ENCODE measurements at regions of chr1 and their contacts with region 1.

Region 1: GRCh38 chr1:18100491-18101063 is 7.0 kb upstream of the IGSF21 start:
- DNase-seq: peak; percentile 67
- ATAC-seq: no peak
- H3K4me3 Mint-ChIP-seq: no peak overlapping the region
- H3K27ac Mint-ChIP-seq: no peak overlapping the region
- H3K4me1 Mint-ChIP-seq: no peaks in the 10 kb centered on the region
- H3K27me3 Mint-ChIP-seq: peaks cover 23% of the 10 kb centered on the region
- CTCF ChIP-seq: peak; percentile 85

Region 2: GRCh38 chr1:17759114-17759513 is 341.5 kb before region 1 on chr1:
- CTCF ChIA-PET with region 1: no interaction called
- POLR2A ChIA-PET with region 1: no interaction called
- intact Hi-C with region 1: no loop called
- DNase-seq: peak; percentile 12
- ATAC-seq: no peak
- H3K4me3 Mint-ChIP-seq: no peak overlapping the region
- H3K27ac Mint-ChIP-seq: no peak overlapping the region
- H3K4me1 Mint-ChIP-seq: no peaks in the 10 kb centered on the region
- H3K27me3 Mint-ChIP-seq: no peaks in the 10 kb centered on the region
- CTCF ChIP-seq: no peak

Region 3: GRCh38 chr1:17892225-17892624 is 208.4 kb before region 1 on chr1:
- CTCF ChIA-PET with region 1: no interaction called
- POLR2A ChIA-PET with region 1: no interaction called
- intact Hi-C with region 1: no loop called
- DNase-seq: no peak
- ATAC-seq: no peak
- H3K4me3 Mint-ChIP-seq: no peak overlapping the region
- H3K27ac Mint-ChIP-seq: no peak overlapping the region
- H3K4me1 Mint-ChIP-seq: no peaks in the 10 kb centered on the region
- H3K27me3 Mint-ChIP-seq: peaks cover 8% of the 10 kb centered on the region
- CTCF ChIP-seq: no peak

Region 4: DNA sequence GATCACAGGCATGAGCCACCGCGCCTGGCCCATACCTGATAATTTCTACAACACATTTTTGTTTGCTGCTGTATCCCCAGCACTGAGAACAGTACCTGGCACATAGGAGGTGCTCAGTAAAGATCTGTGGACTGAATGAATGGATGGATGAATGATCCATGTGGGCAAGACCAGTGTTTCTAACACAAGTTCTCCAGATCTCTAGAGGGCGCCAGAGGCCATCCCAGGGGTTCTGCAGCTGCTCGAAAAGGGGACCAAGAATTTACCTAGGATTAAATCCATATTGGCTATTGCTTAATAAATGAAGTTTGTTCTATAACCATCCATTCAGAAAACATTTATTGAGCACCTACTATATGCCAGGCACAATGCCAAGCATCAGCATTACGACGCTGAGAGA is 177.7 kb before region 1 on chr1:
- CTCF ChIA-PET with region 1: interaction called, 4 read pairs
- POLR2A ChIA-PET with region 1: no interaction called
- intact Hi-C with region 1: loop called (anchors 10 kb)
- DNase-seq: peak; percentile 49
- ATAC-seq: no peak
- H3K4me3 Mint-ChIP-seq: no peak overlapping the region
- H3K27ac Mint-ChIP-seq: no peak overlapping the region
- H3K4me1 Mint-ChIP-seq: no peaks in the 10 kb centered on the region
- H3K27me3 Mint-ChIP-seq: peaks cover 11% of the 10 kb centered on the region
- CTCF ChIP-seq: no peak

Measured in activated CD8-positive, alpha-beta T cell treated with anti-CD3 and anti-CD28 coated beads for 36 hours (primary cell).